ENCODE measurements at regions of chr12 and their contacts with region 1.

Region 1: DNA sequence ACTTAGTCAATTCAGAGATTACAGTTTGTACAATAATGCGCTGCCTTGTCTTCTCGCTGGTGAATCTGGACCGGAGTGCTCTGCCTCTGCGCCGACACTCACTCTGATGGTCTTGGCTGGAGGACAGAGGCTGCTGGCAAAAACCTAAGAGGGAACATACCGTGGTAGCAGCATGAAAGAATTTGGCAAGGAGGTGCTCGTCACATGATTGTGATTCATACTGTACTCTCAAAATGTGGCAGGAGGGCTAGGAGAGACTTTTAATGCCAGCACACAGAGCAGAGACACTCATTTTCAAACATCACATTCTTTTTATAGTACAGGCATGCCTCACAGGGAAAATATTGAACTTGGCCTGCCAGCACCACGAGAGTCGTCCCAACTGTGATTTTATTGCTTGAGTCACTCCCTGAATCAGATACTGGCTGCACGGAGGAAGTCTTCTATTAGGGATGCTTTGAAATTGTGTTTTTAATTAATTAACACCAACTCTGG is 67.8 kb downstream of the HMGA2 start:
- DNase-seq: peak; percentile 97
- H3K4me3 Mint-ChIP-seq: peak overlapping the region; percentile 55
- H3K27ac Mint-ChIP-seq: peak overlapping the region; percentile 69
- H3K4me1 Mint-ChIP-seq: peaks cover 64% of the 10 kb centered on the region
- H3K27me3 Mint-ChIP-seq: no peaks in the 10 kb centered on the region
- CTCF ChIP-seq: no peak

Region 2: DNA sequence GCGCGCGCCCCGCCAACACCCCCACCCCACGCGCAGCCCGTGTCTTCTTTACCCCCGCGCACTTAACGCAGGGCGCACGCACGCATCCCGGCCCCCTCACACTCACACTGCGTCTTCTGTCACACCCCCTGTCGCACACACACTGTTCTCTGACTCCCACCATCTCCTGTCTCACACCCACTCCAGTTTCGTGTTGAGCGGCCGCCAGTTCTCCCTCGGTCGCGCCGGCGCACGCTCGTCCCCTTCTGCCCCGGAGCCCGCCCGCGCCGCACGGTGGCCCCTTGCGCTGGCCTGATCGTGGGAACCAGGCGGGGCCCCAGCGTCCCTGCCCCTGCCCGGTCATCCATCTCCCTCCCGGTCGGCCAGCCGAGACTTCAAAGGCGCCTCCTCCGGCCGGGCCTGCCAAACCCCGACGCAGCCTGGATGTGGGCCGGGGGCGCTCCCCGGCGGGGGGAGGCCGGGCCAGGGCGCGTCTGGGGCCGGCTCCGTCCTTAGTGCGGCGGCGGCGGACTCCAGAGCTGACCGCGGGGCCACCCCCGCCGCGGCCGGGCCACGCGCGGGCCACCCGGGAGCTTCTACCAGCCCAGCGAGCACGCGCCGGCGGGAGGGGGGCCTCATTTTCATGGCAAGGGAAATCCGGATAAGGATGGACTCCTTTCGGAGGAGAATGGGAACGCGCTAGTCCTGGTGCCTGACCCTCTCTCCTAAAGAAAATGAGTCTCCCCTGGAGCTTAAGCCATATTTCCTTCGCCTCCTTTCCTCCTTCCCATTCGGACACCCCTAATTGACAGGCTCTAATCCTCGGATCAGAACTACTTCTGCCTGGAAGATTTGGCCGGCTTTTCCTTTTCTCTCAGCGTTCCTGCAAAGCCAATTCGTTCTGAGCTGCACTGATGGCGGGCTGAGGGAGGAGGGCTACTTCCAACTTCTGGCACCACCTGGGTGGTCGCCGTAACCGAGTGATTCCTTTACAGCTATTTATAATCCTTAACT is 149.7 kb before region 1 on chr12:
- CTCF ChIA-PET with region 1: no interaction called
- POLR2A ChIA-PET with region 1: no interaction called
- intact Hi-C with region 1: no loop called
- DNase-seq: no peak
- H3K4me3 Mint-ChIP-seq: peak overlapping the region; percentile 86
- H3K27ac Mint-ChIP-seq: no peak overlapping the region
- H3K4me1 Mint-ChIP-seq: no peaks in the 10 kb centered on the region
- H3K27me3 Mint-ChIP-seq: no peaks in the 10 kb centered on the region
- CTCF ChIP-seq: no peak

Region 3: DNA sequence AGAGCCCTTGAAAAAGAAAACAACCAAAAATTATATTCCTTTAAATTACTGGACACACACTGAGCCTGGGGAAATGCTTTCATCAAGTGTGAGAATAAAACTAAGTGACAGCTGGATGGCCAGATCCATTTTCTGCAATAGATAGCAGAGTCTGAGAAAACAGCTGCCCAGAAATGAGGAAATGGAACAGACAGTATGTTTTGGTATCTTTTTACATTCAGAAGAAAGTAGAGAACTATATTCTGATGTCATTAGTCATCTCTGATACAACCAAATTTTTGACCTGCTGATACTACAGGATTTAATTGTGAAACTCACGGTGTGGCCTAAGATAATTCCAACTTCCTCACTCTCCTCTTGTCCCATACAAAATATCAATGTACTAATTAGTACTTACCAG is 10.5 kb after region 1 on chr12:
- CTCF ChIA-PET with region 1: interaction called, 12 read pairs
- POLR2A ChIA-PET with region 1: interaction called, 12 read pairs
- intact Hi-C with region 1: no loop called
- DNase-seq: no peak
- H3K4me3 Mint-ChIP-seq: peak overlapping the region; percentile 29
- H3K27ac Mint-ChIP-seq: peak overlapping the region; percentile 77
- H3K4me1 Mint-ChIP-seq: peaks cover 31% of the 10 kb centered on the region
- H3K27me3 Mint-ChIP-seq: no peaks in the 10 kb centered on the region
- CTCF ChIP-seq: no peak

Region 4: GRCh38 chr12:65907513-65907912 is 15.5 kb after region 1 on chr12:
- CTCF ChIA-PET with region 1: interaction called, 12 read pairs
- POLR2A ChIA-PET with region 1: interaction called, 12 read pairs
- intact Hi-C with region 1: no loop called
- DNase-seq: no peak
- H3K4me3 Mint-ChIP-seq: no peak overlapping the region
- H3K27ac Mint-ChIP-seq: no peak overlapping the region
- H3K4me1 Mint-ChIP-seq: peaks cover 44% of the 10 kb centered on the region
- H3K27me3 Mint-ChIP-seq: no peaks in the 10 kb centered on the region
- CTCF ChIP-seq: no peak

Region 5: GRCh38 chr12:65948320-65949008 is 56.4 kb after region 1 on chr12:
- CTCF ChIA-PET with region 1: interaction called, 3 read pairs
- POLR2A ChIA-PET with region 1: interaction called, 14 read pairs
- intact Hi-C with region 1: loop called (anchors 1 kb)
- DNase-seq: peak; percentile 98
- H3K4me3 Mint-ChIP-seq: peak overlapping the region; percentile 68
- H3K27ac Mint-ChIP-seq: peak overlapping the region; percentile 96
- H3K4me1 Mint-ChIP-seq: peaks cover 63% of the 10 kb centered on the region
- H3K27me3 Mint-ChIP-seq: no peaks in the 10 kb centered on the region
- CTCF ChIP-seq: no peak

Region 6: GRCh38 chr12:65986047-65986446 is 94.0 kb after region 1 on chr12:
- CTCF ChIA-PET with region 1: no interaction called
- POLR2A ChIA-PET with region 1: no interaction called
- intact Hi-C with region 1: loop called (anchors 5 kb)
- DNase-seq: no peak
- H3K4me3 Mint-ChIP-seq: no peak overlapping the region
- H3K27ac Mint-ChIP-seq: no peak overlapping the region
- H3K4me1 Mint-ChIP-seq: peaks cover 5% of the 10 kb centered on the region
- H3K27me3 Mint-ChIP-seq: no peaks in the 10 kb centered on the region
- CTCF ChIP-seq: no peak

Measured in MCF 10A (cell line).